ENCODE measurements at regions of chr14 and their contacts with region 1.

Region 1: DNA sequence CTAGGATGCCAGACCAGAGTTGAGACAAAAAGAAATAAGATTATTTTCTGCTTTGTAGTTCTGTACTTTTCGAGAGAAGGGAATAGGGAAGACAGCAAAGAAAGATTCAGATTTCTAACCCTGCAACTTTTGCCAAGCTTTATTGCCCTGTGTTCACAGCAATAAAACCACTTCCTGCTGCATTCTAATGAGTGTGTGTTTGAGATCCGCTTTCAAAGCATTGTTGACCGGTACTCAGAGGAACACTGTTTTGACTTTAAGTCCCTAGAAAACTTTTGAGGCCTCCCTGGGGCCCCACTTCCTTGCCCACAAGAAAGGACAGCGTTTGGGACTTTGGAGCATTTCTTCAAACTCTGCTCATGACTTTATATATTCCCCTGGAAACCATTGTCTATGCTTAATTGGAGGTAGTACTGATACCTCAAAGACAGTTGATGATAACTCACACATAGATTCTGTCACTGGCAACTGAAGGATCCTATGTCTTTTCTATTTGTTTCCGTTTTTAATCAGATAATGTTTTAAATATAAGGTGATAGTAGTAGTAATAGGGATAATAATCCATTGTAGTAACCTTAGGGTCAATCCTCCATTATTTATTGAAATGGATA is 1.3 kb downstream of the RNASE6 start:
- DNase-seq: peak in 4 of 5 donors; percentile 29 to 44 (median 35)
- H3K4me3 ChIP-seq: peak overlapping the region; percentile 23 to 68
- H3K4me3 Mint-ChIP-seq: peak overlapping the region; percentile 81 to 95 (median 86)
- H3K27ac ChIP-seq: peak overlapping the region; percentile 32
- H3K27ac Mint-ChIP-seq: peak overlapping the region; percentile 82 to 95 (median 86)
- H3K4me1 ChIP-seq: peaks cover 43% of the 10 kb centered on the region
- H3K4me1 Mint-ChIP-seq: peaks cover 25 to 50% (median 41%) of the 10 kb centered on the region in 4 donors
- H3K27me3 ChIP-seq: no peaks in the 10 kb centered on the region
- H3K27me3 Mint-ChIP-seq: no peaks in the 10 kb centered on the region

Region 2: DNA sequence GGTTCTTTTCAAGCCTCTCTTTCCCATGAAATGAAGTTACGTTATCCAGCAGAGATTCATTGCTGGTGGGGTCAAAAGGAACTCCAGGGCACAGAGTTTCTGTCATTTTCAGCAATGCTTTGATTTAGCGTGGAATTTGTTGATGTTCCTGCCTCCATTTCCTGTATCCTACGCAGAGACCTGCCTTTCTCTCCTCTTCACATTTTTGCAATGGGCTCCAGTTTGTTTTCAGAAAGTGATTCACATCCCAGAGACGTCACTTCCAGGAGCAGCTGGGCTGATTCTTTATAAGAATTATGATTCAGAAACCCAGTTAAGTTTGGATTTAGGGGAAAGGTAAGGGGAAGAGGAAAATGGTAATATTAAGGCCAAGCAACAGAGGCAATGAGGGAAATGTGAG is 265.5 kb before region 1 on chr14:
- CTCF ChIA-PET with region 1: no interaction called
- POLR2A ChIA-PET with region 1: no interaction called
- intact Hi-C with region 1: no loop called
- DNase-seq: no peak
- H3K4me3 ChIP-seq: no peak overlapping the region
- H3K4me3 Mint-ChIP-seq: no peak overlapping the region
- H3K27ac ChIP-seq: no peak overlapping the region
- H3K27ac Mint-ChIP-seq: no peak overlapping the region
- H3K4me1 ChIP-seq: no peaks in the 10 kb centered on the region
- H3K4me1 Mint-ChIP-seq: peaks cover 0 to 1% (median 0%) of the 10 kb centered on the region in 4 donors
- H3K27me3 ChIP-seq: no peaks in the 10 kb centered on the region
- H3K27me3 Mint-ChIP-seq: peaks cover 0 to 1% of the 10 kb centered on the region in 2 donors

Region 3: DNA sequence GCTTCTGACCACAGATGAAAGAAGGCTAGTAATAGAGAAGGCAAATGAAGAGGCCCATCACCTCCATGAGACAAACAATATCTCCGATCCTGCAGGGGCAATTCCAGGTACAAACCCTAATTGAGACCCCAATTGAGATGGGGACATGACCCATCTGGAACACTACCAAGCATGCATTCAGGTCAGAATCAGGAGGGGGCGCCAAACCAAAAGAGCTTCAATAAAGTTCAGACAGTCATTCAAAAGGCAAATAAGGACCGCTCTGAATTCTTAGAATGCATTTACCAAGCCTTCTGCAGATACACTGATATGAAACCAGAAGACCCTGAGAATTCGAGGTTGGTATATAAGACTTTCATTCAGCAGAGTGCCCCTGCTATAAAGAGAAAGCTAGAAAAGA is 24.4 kb before region 1 on chr14:
- CTCF ChIA-PET with region 1: interaction called, 12 read pairs
- POLR2A ChIA-PET with region 1: no interaction called
- intact Hi-C with region 1: no loop called
- DNase-seq: peak in 4 of 5 donors; percentile 16 to 34 (median 26)
- H3K4me3 ChIP-seq: no peak overlapping the region
- H3K4me3 Mint-ChIP-seq: no peak overlapping the region
- H3K27ac ChIP-seq: no peak overlapping the region
- H3K27ac Mint-ChIP-seq: no peak overlapping the region
- H3K4me1 ChIP-seq: no peaks in the 10 kb centered on the region
- H3K4me1 Mint-ChIP-seq: no peaks in the 10 kb centered on the region
- H3K27me3 ChIP-seq: no peaks in the 10 kb centered on the region
- H3K27me3 Mint-ChIP-seq: peaks cover 0 to 2% of the 10 kb centered on the region in 2 donors

Region 4: DNA sequence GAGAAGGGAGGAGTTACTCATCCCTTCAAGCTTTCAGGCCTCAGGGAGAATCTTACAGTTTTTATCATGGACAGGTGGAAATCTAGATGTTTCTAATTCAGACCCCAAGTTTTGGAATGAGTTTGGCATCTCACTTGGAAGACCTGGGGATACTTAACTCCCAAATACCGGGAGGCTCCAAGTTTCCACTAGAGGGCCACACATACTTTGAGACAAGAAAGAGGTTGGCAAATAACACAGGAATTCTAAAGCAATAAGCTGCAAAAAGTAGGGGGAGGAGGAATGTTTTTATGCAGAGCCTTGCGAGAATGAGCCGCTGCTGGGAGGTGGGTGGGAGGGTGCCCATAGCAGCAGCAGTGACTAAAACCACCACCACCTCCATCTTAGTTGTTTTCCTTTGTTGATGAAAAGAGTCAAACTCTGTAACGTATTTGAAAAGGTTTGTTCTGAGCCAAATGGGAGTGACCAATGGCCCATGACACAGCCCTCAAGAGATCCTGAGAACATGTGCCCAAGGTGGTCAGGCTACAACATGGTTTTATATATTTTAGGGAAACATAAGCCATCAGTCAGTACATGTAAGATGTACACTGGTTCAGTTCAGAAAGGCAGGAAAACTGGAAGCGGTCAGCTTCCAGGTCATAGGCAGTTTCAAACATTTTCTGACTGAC is 54.4 kb after region 1 on chr14:
- CTCF ChIA-PET with region 1: no interaction called
- POLR2A ChIA-PET with region 1: no interaction called
- intact Hi-C with region 1: loop called (anchors 5 kb)
- DNase-seq: no peak
- H3K4me3 ChIP-seq: no peak overlapping the region
- H3K4me3 Mint-ChIP-seq: no peak overlapping the region
- H3K27ac ChIP-seq: no peak overlapping the region
- H3K27ac Mint-ChIP-seq: no peak overlapping the region
- H3K4me1 ChIP-seq: no peaks in the 10 kb centered on the region
- H3K4me1 Mint-ChIP-seq: no peaks in the 10 kb centered on the region
- H3K27me3 ChIP-seq: no peaks in the 10 kb centered on the region
- H3K27me3 Mint-ChIP-seq: peaks cover 2 to 8% of the 10 kb centered on the region in 2 donors

Region 5: DNA sequence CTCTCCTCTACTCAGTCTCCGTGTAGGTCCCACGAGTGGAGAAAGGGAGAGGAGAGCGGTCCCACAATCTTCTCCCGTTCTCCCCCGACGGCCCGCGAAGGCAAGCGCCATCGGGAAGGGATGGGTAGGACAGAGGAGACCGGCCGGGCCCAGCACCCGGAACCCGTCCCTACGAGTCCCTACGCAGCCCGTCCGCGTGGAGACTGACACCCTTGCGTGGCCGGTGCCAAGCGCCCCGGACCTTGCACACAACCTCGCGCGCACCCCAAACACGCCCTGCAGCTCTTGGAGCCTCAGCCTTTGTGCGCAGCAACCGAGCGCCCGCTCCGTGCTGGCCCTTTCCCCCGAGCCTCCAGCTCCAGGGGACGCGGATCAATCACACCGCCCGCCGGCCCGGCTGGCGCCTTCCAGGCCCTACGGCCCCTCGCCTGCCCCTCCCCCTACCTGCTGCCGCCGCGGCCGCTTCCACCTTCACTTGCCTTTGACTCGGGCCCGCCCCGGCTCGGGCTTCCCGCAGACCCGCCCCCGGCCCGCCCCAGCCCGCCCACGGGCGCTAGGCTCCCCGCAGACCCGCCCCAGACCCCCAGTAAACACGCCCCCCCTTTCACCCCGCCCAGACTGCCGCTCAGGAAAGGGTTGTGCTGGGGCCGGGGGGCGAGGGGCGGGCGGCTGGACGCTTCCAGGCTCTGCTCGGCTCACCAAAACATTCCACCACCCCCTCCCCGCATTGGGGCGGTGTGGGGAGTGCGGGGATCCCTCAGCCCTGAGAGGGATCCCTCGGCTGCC is 242.4 kb after region 1 on chr14 and contains the start of gene NDRG2:
- CTCF ChIA-PET with region 1: no interaction called
- POLR2A ChIA-PET with region 1: no interaction called
- intact Hi-C with region 1: no loop called
- DNase-seq: peak; percentile 71 to 79 (median 72)
- H3K4me3 ChIP-seq: peak within 1 kb of the TSS; percentile 69 to 77
- H3K4me3 Mint-ChIP-seq: peak within 1 kb of the TSS; percentile 83 to 95 (median 91)
- H3K27ac ChIP-seq: peak within 1 kb of the TSS; percentile 51
- H3K27ac Mint-ChIP-seq: peak within 1 kb of the TSS; percentile 77 to 93 (median 92)
- H3K4me1 ChIP-seq: peaks cover 20% of the 10 kb centered on the region
- H3K4me1 Mint-ChIP-seq: peaks cover 12 to 33% (median 22%) of the 10 kb centered on the region in 4 donors
- H3K27me3 ChIP-seq: no peaks in the 10 kb centered on the region
- H3K27me3 Mint-ChIP-seq: no peaks in the 10 kb centered on the region
- total RNA-seq, gene NDRG2: 31.9 to 32.4 TPM